Heart left ventricle (tissue), 16 donors: ENCODE measurements at regions of chr10 and their contacts with region 1.

Region 1: GRCh38 chr10:3239066-3239919 is 66.7 kb upstream of the PITRM1 start:
- DNase-seq: peak; percentile 70 to 85 (median 75)
- ATAC-seq: peak; percentile 59 to 88 (median 82)
- H3K4me3 ChIP-seq: peak overlapping the region in 8 of 12 donors; percentile 6 to 36 (median 24)
- H3K27ac ChIP-seq: peak overlapping the region in 8 of 12 donors; percentile 39 to 75 (median 54)
- H3K4me1 ChIP-seq: peaks cover 0 to 10% (median 3%) of the 10 kb centered on the region in 12 donors
- H3K27me3 ChIP-seq: no peaks in the 10 kb centered on the region
- CTCF ChIP-seq: peak; percentile 84 to 98 (median 94)
- POLR2A ChIP-seq: no peak

Region 2: DNA sequence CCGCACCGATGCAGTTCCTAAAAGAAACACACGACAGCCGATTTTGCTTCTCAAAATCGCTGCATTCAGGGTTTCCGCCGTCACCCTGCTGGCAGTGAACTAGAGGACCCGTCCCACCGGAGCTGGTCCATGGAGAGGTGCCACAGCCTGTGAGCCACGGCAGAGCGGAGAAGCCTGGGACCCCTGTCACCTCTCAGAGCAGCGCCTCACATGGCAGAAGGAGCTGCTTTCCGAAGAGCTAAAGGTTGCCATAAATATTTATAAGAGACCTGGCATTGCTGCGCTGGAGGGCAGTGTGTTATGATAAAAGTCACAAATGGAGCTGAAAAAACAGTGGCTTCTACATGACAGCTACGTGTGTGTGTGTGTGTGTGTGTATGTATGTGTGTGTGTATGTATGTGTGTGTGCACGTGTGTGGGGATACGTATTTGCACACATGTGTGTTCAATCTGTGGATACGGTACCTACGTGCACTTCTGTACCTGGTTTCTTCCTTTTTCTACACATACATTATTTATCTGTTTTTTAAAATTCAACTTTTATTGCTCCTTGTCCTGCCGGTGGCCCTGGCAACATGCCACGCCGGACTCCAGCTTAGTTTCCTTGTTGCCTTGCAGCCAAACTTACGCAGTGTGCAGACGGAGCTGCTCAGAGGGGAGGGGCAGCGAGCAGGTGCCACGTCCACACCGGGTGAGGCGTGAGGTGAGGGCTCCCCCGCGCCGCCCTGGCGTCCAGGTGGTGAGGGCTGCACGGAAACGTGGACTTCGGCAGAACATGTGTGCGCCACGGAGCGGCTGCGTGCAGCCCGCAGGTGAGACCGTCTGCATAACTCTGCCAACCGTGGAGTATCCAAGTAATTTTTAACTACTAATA is 48.5 kb after region 1 on chr10:
- intact Hi-C with region 1: no loop called
- DNase-seq: no peak
- ATAC-seq: peak in 1 of 4 donors; percentile 18
- H3K4me3 ChIP-seq: no peak overlapping the region
- H3K27ac ChIP-seq: no peak overlapping the region
- H3K4me1 ChIP-seq: no peaks in the 10 kb centered on the region
- H3K27me3 ChIP-seq: no peaks in the 10 kb centered on the region
- CTCF ChIP-seq: no peak
- POLR2A ChIP-seq: no peak

Region 3: DNA sequence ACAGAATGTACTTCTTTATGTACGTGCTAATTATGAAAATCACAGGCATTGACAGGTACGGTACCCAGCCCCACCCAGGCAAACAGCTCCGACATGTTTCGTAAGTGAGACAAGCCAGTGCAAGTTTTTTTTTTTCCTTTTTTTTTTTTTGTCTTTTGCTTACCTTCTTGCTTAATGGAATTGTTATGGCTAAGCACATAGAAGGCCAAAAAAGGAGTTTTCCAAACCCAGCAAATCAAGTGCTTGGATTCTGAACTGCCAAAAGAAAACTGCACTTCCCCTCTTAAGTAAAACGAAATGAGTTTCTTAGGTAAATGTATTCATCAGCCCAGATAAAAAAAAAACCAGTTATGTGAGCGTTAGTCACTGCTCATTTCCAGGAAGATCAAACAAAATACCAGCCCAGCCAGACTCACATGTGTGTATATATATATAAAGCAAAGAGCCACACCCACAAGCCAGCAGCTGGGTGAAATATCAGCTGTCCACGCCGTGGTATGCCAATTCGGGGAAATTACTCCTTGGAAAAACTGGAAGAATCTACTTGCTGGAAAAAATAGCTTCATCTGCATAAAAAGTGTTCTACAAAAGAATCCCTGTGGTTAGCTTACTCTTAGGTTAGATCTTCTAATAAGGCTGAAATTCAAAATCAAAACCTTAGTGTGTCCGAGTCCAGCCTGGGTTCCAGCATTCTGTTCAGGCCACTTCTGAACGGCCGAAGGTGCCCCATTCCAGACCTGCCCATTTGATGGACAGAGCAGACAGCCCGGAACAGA is 537.7 kb after region 1 on chr10:
- intact Hi-C with region 1: loop called in 9 of 10 experiments (anchors 2 to 10 kb)
- DNase-seq: peak in 3 of 5 donors; percentile 49 to 61 (median 51)
- ATAC-seq: peak in 3 of 4 donors; percentile 30 to 36 (median 34)
- H3K4me3 ChIP-seq: peak overlapping the region in 2 of 12 donors; percentile 2 to 100
- H3K27ac ChIP-seq: peak overlapping the region in 11 of 12 donors; percentile 66 to 100 (median 99)
- H3K4me1 ChIP-seq: peaks cover 23 to 78% (median 72%) of the 10 kb centered on the region in 12 donors
- H3K27me3 ChIP-seq: no peaks in the 10 kb centered on the region
- CTCF ChIP-seq: no peak
- POLR2A ChIP-seq: no peak

Region 4: DNA sequence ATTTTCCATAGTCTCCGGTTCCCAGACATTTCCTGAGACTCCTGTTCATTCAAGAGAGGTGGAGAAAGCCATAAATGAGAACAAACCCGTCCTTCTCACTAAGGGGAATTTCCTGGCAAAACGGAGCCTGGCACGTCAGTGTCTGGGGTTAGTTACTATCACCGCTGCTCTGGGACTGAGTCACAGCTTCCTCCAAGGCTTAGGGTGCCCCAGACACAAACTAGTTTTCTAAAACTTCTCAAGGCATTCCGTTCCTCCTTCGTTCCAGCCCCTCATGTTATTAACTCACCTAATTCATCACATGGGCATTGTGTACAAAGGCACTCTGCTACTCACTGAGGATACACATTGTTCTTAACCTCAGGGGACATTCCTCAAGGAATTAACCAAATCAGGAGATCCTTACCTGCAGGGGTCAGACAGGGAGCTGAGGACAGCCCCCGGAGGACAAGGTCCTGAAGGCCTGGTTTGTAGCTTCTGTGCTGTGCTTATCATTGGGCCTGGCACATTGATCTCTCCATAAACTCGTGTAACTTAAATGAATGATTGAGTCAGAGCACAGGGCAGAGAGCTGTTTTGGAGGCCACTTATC is 648.7 kb after region 1 on chr10:
- intact Hi-C with region 1: loop called in 1 of 10 experiments (anchors 5 kb)
- DNase-seq: peak in 1 of 5 donors; percentile 54
- ATAC-seq: peak in 3 of 4 donors; percentile 25 to 56 (median 43)
- H3K4me3 ChIP-seq: no peak overlapping the region
- H3K27ac ChIP-seq: peak overlapping the region; percentile 72 to 88 (median 82)
- H3K4me1 ChIP-seq: peaks cover 0 to 35% (median 19%) of the 10 kb centered on the region in 12 donors
- H3K27me3 ChIP-seq: no peaks in the 10 kb centered on the region
- CTCF ChIP-seq: no peak
- POLR2A ChIP-seq: no peak